Motor neuron (in vitro differentiated cells): ENCODE measurements at regions of chr9 and their contacts with region 1.

Region 1: GRCh38 chr9:117344892-117345659 is 69.8 kb downstream of the ASTN2 start:
- ATAC-seq: peak in 6 of 8 experiments; percentile 13 to 52 (median 34)
- H3K4me3 ChIP-seq: no peak overlapping the region
- H3K27ac ChIP-seq: no peak overlapping the region
- H3K4me1 ChIP-seq: peaks cover 4 to 22% of the 10 kb centered on the region in 2 donors

Region 2: DNA sequence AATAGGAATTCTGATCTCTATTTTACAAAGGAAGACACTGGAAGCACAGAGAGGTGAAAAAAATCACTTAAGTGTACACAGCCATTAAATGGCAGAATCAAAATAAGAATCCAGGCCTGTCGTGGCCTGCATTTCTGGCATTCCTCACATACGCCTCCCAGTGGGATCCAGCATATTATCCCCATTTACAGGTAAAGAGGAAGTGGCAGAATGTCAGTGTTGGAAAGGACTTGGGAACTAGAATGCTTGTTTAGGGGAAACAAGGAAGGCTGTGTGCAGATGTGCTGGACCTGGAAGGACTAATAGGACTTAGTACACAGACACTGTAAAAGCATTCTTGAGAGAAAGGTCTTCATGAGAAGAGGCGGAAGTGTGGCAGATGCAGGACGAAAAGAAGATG is 416.2 kb before region 1 on chr9:
- in situ Hi-C with region 1: no loop called
- ATAC-seq: no peak
- H3K4me3 ChIP-seq: no peak overlapping the region
- H3K27ac ChIP-seq: no peak overlapping the region
- H3K4me1 ChIP-seq: no peaks in the 10 kb centered on the region

Region 3: DNA sequence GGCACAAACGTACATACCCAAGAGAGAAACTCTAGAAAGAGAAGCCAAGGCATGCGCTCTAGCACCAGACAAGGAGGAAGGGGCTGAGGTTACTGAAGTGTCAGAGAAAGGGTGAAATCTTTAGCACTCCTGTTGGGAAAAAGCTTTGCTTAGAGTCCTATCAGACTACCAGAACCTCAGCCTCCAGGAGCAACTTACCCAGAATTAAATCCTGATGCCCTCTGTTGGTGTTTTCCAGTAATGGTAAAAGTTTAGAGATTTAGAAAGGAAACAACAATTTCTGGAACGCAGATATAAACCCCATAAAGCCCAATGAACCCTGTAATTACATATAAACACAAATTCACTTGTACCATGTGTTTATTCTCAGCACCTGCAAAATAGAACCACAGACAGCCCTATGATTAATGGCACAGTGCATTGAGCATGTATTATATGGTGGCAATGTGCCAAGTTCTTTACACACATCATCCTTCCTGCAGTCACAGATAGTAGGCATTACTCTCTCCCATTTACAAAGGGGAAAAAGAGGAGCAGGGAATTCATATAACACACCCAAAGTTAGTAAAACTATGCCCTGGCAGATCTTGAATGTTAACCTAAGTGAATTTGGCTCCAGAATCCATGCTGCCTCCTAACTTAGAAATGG is 103.1 kb after region 1 on chr9:
- in situ Hi-C with region 1: loop called in 1 of 9 experiments (anchors 25 kb)
- ATAC-seq: no peak
- H3K4me3 ChIP-seq: no peak overlapping the region
- H3K27ac ChIP-seq: no peak overlapping the region
- H3K4me1 ChIP-seq: peaks cover 0 to 5% of the 10 kb centered on the region in 2 donors

Region 4: DNA sequence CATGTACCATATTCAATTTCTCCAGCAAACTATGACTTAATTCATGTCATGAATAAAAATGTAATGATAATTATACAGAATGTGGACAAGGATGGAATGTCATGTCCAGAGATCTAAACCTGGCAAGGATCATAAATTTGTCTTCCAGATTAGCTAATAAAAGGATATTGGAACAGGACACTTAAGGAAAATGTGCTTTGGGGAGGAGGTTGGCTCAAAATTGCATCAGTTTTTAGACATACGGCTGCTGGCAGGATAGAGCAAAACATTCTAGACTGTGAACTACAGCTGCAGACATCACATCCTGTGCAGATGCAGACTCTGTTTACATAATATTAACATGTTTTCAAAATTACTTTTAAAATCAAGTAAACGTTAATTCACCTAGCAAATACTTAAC is 607.5 kb after region 1 on chr9:
- in situ Hi-C with region 1: no loop called
- ATAC-seq: peak in 3 of 8 experiments; percentile 18 to 37 (median 37)
- H3K4me3 ChIP-seq: no peak overlapping the region
- H3K27ac ChIP-seq: no peak overlapping the region
- H3K4me1 ChIP-seq: peaks cover 0 to 10% of the 10 kb centered on the region in 2 donors